ENCODE measurements at regions of chr11 and their contacts with region 1.

Region 1: GRCh38 chr11:17730608-17731462 is 3.7 kb upstream of the KCNC1 start:
- DNase-seq: peak; percentile 48 to 70
- H3K4me3 ChIP-seq: no peak overlapping the region
- H3K27ac ChIP-seq: no peak overlapping the region
- H3K4me1 ChIP-seq: peaks cover 0 to 6% of the 10 kb centered on the region in 2 donors
- H3K27me3 ChIP-seq: peaks cover 0 to 9% of the 10 kb centered on the region in 2 donors
- CTCF ChIP-seq: peak; percentile 68 to 79 (median 74)
- POLR2A ChIP-seq: no peak

Region 2: DNA sequence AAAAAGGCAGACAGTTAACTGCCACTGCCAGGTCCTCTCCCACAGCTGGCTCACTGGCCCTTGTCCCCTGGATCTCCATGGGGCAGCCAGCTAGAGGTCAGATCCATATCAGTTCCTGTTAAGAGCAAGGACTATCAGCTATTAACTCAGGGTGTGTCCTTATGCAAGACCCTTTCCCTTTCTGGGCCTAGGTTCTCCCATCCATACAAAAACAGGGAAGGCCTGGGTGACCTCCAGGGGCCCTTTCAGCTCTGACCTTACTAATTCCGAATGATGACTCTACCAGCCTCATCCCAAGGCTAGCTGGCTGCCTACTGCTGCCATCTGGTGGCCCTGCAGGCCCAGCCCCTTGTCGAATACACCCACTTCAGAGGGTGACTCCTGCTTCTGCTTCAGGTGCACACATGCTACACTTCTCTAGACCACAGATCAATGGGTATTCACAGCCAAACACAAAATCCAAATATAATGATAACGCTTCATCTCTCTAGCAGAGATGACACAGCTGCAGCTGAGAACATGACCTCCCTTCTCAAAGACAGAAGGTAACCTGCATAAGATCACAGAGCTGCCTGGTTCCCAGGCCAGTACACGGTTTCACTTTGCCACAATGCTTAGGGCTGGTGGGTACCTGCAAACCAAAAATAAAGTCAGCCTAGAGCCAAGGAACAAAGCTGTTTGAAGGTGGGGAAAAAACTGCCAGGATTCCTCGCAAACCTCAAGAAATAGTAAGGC is 247.9 kb after region 1 on chr11:
- intact Hi-C with region 1: loop called (anchors 5 kb)
- DNase-seq: peak in 1 of 2 donors; percentile 19
- H3K4me3 ChIP-seq: no peak overlapping the region
- H3K27ac ChIP-seq: no peak overlapping the region
- H3K4me1 ChIP-seq: peaks cover 0 to 3% of the 10 kb centered on the region in 2 donors
- H3K27me3 ChIP-seq: no peaks in the 10 kb centered on the region
- CTCF ChIP-seq: peak in 3 of 4 experiments; percentile 18 to 29 (median 23)
- POLR2A ChIP-seq: no peak

Measured in uterus (tissue), 4 donors.